CD8-positive, alpha-beta T cell (primary cell): ENCODE measurements at regions of chr18 and their contacts with region 1.

Region 1: DNA sequence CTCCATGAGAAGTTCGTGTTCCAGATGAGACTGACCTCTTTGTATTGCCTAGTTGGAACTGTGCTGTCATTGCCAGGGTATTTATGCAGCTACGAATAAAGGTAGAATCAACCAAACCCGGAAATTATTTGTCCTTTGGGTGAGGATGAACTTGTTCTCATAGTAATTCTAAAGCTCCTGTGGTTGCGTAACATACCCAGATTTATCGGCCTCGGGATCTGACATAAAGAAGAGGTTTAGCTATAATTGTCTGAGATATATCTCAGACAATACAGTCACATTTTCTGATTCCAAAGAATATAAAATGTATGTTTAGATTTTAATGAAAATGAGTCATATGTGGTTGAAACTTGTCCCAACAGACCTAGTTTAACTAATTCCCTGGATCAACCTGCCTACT is 628.7 kb upstream of the LINC00305 start:
- DNase-seq: no peak
- ATAC-seq: no peak
- H3K4me3 ChIP-seq: no peak overlapping the region
- H3K4me3 Mint-ChIP-seq: no peak overlapping the region
- H3K27ac ChIP-seq: no peak overlapping the region
- H3K27ac Mint-ChIP-seq: no peak overlapping the region
- H3K4me1 ChIP-seq: no peaks in the 10 kb centered on the region
- H3K4me1 Mint-ChIP-seq: no peaks in the 10 kb centered on the region
- H3K27me3 ChIP-seq: no peaks in the 10 kb centered on the region
- H3K27me3 Mint-ChIP-seq: no peaks in the 10 kb centered on the region
- CTCF ChIP-seq: no peak

Region 2: GRCh38 chr18:64803471-64803870 is 25.9 kb after region 1 on chr18:
- CTCF ChIA-PET with region 1: no interaction called
- POLR2A ChIA-PET with region 1: no interaction called
- intact Hi-C with region 1: loop called in 1 of 2 experiments (anchors 1 kb)
- DNase-seq: no peak
- ATAC-seq: no peak
- H3K4me3 ChIP-seq: no peak overlapping the region
- H3K4me3 Mint-ChIP-seq: no peak overlapping the region
- H3K27ac ChIP-seq: no peak overlapping the region
- H3K27ac Mint-ChIP-seq: no peak overlapping the region
- H3K4me1 ChIP-seq: no peaks in the 10 kb centered on the region
- H3K4me1 Mint-ChIP-seq: no peaks in the 10 kb centered on the region
- H3K27me3 ChIP-seq: no peaks in the 10 kb centered on the region
- H3K27me3 Mint-ChIP-seq: no peaks in the 10 kb centered on the region
- CTCF ChIP-seq: no peak